IMR-90 (cell line): ENCODE measurements at regions of chr13 and their contacts with region 1.

Region 1: DNA sequence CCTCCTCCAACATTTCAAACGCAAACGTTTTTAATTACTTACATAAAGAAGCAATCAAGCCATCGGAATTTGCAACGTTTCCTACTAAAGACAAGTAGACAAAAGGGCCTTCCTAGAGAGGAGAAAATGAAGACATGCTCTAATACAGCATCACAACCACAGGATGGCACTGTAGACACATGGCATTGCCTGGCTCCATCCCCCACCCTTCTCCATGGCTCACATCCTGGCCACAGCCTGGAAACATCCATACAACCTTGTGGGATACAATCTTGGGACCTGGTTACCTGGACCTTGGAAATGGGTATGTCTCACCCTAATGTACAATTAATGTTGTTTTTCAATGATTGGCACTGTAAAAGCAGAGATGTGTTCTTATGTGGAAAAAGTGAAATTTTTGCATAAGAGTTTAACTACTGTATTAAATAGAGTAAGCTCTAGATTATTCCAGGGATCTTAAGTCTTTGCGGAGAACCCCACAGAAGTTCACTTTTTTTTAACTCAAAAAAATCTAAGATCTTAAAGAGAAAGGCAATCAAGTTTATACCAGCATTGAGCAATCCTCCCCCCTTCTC is 21.5 kb downstream of the EBPL start:
- DNase-seq: peak; percentile 81
- ATAC-seq: peak; percentile 98
- H3K4me3 ChIP-seq: no peak overlapping the region
- H3K27ac ChIP-seq: no peak overlapping the region
- H3K4me1 ChIP-seq: peaks cover 5% of the 10 kb centered on the region
- H3K27me3 ChIP-seq: no peaks in the 10 kb centered on the region
- CTCF ChIP-seq: peak; percentile 94
- POLR2A ChIP-seq: peak; percentile 61; the same call in 1 of the 2 replicates
- RAD21 ChIP-seq: peak; percentile 98

Region 2: DNA sequence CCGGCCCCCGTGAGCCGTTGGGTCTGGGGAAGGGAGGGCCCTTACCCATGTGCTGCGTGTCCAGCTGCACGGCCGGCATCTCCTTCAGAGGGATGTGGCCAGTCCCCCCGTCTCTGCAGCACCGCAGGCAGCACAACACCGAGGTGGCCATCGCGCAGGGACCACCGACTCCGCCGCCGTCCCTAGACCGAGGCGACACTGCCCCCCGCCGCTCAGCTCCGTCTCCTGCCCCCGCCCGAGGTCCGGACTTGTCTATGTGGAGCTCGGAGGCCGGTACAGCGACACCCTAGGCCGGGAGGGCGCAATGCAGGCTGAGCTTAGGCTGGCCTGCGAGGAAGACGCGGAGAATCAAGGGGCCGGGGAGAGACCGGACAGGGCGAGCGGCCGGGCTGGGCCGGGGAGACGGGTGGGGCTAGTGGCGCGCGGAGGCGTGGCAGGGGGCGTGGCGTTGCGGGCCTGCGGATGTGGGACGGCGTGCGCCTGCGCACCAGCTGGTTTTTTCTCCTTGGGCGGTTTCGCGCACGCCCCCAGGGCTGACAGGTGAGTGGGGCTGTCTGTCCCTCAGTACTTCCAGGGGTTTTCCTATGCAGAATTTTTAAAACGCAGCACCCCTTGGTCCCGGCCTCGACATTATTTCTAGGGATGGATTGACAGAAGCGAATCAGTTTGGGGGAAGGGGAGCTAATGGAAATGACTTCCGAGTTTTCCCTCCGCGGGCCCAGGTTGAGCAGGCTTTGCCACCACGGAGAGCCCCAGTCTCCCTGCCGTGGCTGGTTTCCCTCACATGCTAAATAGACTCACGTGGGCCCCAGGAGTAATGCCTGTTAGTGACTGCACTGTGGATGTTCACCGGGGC is 266.5 kb after region 1 on chr13 and contains the start of gene SPRYD7:
- CTCF ChIA-PET with region 1: no interaction called
- POLR2A ChIA-PET with region 1: no interaction called
- dilution Hi-C with region 1: no loop called
- in situ Hi-C with region 1: no loop called
- intact Hi-C with region 1: loop called (anchors 10 kb)
- DNase-seq: peak; percentile 97
- ATAC-seq: peak; percentile 100
- H3K4me3 ChIP-seq: peak within 1 kb of the TSS; percentile 74
- H3K27ac ChIP-seq: peak within 1 kb of the TSS; percentile 82
- H3K4me1 ChIP-seq: peaks cover 4% of the 10 kb centered on the region; the same call in 1 of the 2 replicates
- H3K27me3 ChIP-seq: no peaks in the 10 kb centered on the region
- CTCF ChIP-seq: peak; percentile 93
- POLR2A ChIP-seq: peak; percentile 61; the same call in 1 of the 2 replicates
- RAD21 ChIP-seq: peak; percentile 33
- total RNA-seq, gene SPRYD7: 5.6 and 9.7 TPM in 2 replicates

Region 3: DNA sequence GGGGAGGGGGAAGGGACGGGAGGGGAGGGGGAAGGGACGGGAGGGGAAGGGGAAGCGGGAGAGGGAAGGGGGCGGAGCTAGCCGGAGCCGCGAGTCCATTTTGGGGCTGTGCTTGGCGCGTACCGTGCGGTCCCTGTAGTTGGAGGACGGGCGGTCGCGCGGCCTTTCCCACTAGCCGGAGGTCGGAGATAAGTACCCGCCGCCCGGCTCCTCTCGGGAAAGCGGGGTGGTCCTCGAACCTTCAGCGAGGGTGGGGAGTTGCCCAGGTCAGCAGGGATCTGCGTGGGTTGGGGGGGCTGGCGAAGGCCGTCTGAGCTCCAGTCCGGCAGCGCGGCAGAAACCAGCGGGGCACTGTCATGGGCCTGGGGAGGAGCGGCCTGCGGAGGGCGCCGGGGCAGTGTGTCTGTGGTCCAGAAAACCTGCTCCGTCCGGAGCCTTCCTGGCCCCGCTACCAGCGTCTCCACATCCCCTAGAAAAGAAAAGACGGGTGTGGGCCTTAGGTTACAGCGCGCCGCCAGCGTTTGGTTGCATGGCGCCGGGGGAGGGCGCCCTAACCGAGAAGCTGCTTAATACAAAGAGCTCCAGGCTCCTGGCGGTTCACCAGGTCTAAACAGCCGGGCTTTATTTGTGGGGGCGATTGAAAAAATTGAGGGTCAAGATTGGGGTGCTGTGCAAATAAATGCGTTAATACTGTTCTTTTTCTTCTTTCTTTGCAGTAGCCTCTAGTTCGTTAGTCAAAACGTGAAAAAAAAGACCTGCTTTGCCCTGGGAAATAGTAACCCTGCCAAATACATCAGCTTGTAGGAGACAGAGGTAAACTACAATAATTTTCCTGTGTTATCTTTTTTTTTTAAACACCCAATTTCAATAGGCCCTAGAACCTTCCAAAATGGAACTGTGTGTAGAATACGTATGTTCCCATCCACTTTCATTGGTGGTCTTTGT is 327.4 kb after region 1 on chr13 and contains the start of gene TRIM13:
- CTCF ChIA-PET with region 1: no interaction called
- POLR2A ChIA-PET with region 1: no interaction called
- dilution Hi-C with region 1: no loop called
- in situ Hi-C with region 1: no loop called
- intact Hi-C with region 1: loop called (anchors 2 kb)
- DNase-seq: peak; percentile 88
- ATAC-seq: peak; percentile 87
- H3K4me3 ChIP-seq: peak within 1 kb of the TSS; percentile 87
- H3K27ac ChIP-seq: peak within 1 kb of the TSS; percentile 98
- H3K4me1 ChIP-seq: peaks cover 4% of the 10 kb centered on the region
- H3K27me3 ChIP-seq: no peaks in the 10 kb centered on the region
- CTCF ChIP-seq: peak; percentile 82
- POLR2A ChIP-seq: peak; percentile 87
- RAD21 ChIP-seq: peak; percentile 68
- total RNA-seq, gene TRIM13: 20.1 and 22.5 TPM in 2 replicates

Region 4: DNA sequence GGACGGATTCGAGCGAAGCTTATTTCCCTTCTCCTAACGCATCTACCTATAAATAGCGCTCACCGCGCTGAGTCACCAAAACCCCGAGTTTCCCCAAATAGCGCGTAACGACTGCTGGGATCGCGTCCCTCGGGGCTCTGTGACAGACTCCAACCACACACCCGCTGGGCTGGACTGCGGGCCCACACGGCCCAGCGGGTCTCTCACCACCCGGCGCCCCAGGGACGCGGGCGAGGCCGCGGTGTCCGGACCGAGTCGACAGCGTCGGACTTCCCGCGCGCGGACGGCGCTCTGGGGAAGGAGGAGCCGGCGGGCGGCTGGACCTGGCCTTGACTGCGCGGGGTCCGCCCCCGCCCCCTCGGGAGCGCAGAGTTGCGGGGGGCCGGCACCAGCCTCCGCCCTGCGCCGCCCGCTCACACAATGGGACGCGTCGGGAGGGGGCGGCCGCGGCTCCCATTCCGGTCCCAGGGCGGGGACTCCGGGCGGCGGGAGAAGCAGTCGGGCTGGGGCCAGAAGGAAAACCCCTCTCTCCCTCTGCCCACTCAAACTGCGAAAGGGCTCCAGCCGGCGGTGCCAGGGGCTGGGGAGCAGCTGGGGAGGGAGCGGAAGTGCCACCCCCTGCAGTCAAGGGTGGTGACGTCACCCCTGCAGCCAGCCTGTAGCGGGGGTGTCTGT is 454.2 kb after region 1 on chr13:
- CTCF ChIA-PET with region 1: no interaction called
- POLR2A ChIA-PET with region 1: no interaction called
- dilution Hi-C with region 1: no loop called
- in situ Hi-C with region 1: no loop called
- intact Hi-C with region 1: loop called (anchors 1 kb)
- DNase-seq: peak; percentile 97
- ATAC-seq: peak; percentile 72
- H3K4me3 ChIP-seq: peak overlapping the region; percentile 76
- H3K27ac ChIP-seq: peak overlapping the region; percentile 95
- H3K4me1 ChIP-seq: peaks cover 7% of the 10 kb centered on the region
- H3K27me3 ChIP-seq: no peaks in the 10 kb centered on the region
- CTCF ChIP-seq: 0 out of 2 replicates have a peak, but pooled peaks have one; percentile 13
- POLR2A ChIP-seq: peak; percentile 94
- RAD21 ChIP-seq: no peak; the same call in 1 of the 2 replicates

Region 5: DNA sequence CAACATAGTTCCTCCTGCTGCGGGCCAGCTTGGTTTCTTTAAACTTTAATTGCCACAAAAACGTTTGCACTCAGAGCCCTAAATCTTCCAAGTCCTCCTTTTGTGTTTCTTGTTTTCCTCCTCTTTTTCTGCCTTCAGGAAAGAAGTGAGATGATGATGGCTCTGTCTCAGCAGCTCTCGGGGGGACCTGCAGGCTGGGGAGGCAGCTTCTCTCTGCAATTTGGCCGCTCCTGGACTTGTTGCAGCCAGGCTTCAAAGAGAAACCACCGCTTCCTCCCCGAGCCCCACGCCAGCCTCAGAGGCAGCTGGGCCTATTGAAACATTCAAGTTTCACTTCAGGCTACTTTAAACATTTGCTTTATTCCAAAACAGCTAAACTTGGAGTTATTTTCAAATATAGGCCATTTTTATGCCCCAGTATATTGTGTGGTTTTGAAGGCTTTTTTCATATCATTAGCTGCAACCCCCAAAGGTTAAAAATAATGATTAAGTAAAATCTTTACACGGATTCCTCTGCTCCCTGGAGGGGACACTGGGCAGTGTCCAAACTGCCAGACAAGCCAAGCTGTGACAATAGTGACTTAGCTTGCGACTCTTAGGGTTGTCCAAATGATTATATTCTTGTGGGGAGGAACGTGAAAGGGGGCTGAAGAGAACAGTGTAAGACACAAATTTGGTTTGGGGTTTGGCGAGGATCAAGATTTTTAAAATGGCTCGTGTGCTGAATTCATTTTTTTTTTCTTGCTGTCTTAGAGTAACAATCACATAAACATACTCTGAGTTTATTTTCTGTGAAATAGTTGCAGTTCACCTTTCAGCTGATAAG is 842.9 kb after region 1 on chr13:
- CTCF ChIA-PET with region 1: no interaction called
- POLR2A ChIA-PET with region 1: no interaction called
- dilution Hi-C with region 1: no loop called
- in situ Hi-C with region 1: no loop called
- intact Hi-C with region 1: loop called (anchors 10 kb)
- DNase-seq: peak; percentile 61
- ATAC-seq: peak; percentile 89
- H3K4me3 ChIP-seq: peak overlapping the region; percentile 28
- H3K27ac ChIP-seq: peak overlapping the region; percentile 76
- H3K4me1 ChIP-seq: peaks cover 4% of the 10 kb centered on the region
- H3K27me3 ChIP-seq: no peaks in the 10 kb centered on the region
- CTCF ChIP-seq: no peak
- POLR2A ChIP-seq: no peak
- RAD21 ChIP-seq: no peak

Region 6: DNA sequence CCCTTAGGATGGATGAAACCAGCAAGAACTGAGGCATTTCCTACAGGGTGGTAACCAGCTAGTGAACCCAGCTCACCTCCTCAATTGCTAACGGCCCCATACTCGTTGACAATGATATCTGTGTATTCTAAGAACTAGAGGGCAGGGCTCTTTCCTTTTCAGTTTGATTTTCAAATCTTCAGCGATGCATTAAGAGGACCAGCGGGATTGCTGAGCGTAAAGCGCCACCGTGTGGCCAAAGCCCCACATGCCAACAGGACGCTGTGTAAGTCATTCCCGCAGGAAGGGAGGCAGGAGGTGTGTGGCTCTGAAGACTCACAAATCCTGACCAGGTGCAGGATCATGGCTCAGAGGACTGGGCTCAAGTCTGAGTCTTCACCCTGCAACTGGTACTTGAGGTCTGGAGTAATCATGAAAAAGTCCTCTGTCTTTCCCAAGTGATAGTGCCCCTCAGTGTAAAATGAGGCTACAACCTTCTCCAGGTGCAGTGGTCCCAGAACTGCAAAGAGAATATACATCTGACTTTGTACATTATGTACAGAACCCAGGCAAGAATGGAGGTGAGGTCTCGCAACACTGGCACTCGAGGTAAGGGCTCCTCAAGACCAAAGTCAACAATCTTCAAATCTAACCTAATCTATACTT is 1400.3 kb after region 1 on chr13:
- CTCF ChIA-PET with region 1: no interaction called
- POLR2A ChIA-PET with region 1: no interaction called
- dilution Hi-C with region 1: no loop called
- in situ Hi-C with region 1: loop called (anchors 25 kb)
- intact Hi-C with region 1: loop called (anchors 1 kb)
- DNase-seq: peak; percentile 72
- ATAC-seq: peak; percentile 95
- H3K4me3 ChIP-seq: no peak overlapping the region
- H3K27ac ChIP-seq: no peak overlapping the region
- H3K4me1 ChIP-seq: peaks cover 1% of the 10 kb centered on the region; the same call in 1 of the 2 replicates
- H3K27me3 ChIP-seq: peaks cover 27% of the 10 kb centered on the region
- CTCF ChIP-seq: peak; percentile 93
- POLR2A ChIP-seq: peak; percentile 54; the same call in 1 of the 2 replicates
- RAD21 ChIP-seq: peak; percentile 98